Left lung (tissue), 14 donors: ENCODE measurements at regions of chr12 and their contacts with region 1.

Region 1: DNA sequence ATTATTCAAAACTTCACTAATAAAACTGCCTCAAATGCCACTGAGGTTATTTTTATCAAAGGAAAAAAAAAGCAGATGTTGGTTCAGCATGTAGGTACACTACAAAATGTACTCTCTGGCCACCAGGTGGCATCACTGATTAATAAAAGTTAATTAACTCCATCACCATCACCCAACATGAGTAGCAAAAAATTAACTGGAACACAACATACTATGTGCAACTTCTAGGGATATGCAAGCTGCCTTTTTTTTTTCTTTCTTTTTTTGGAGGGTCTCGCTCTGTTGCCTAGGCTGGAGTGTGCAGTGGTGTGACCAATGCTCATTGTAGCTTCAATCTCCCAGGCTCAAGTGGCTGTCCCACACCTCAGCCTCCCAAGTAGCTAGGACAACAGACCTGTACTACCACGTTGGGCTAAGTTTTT is 43.8 kb upstream of the NR2C1 start:
- DNase-seq: peak in 3 of 4 donors; percentile 51 to 84 (median 71)
- ATAC-seq: peak; percentile 84
- H3K4me3 ChIP-seq: no peak overlapping the region
- H3K27ac ChIP-seq: peak overlapping the region in 1 of 2 donors; percentile 57
- H3K4me1 ChIP-seq: peaks cover 11 to 18% of the 10 kb centered on the region in 2 donors
- H3K27me3 ChIP-seq: no peaks in the 10 kb centered on the region
- CTCF ChIP-seq: peak; percentile 72 to 77

Region 2: GRCh38 chr12:94889445-94890210 is 227.6 kb before region 1 on chr12:
- intact Hi-C with region 1: no loop called
- DNase-seq: no peak
- ATAC-seq: no peak
- H3K4me3 ChIP-seq: no peak overlapping the region
- H3K27ac ChIP-seq: no peak overlapping the region
- H3K4me1 ChIP-seq: no peaks in the 10 kb centered on the region
- H3K27me3 ChIP-seq: no peaks in the 10 kb centered on the region
- CTCF ChIP-seq: no peak

Region 3: DNA sequence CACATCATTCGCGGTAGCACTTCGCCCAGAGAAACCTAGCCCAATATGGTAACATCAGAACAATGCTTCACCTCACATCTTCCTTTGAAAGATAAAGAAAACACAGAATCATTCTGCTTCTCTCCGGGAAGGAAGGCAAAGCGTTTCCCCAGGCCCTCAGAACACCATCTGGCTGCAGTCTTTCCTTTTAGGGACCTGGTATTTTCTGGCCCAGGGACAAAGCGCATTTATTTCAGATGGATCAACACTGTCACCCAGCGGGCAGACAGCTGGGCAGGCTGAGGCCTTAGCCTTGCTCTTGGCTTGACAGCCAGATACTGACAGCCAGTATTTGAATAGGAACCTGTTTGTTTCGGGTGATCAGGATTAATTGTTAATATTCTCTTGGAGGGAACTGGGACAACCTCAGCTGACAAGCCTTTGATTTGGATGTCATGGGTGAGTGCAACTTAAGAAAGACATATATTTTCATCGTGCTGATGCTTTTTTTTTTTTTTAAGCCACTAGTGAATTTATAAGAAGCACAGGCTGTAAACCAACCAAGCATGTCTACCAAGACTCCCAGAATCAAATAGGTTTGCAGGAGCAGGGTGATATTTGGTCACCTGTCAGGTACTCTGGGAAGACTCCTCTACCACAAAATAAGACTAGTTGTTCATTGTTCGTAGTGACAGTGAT is 219.3 kb after region 1 on chr12:
- intact Hi-C with region 1: loop called in 1 of 2 experiments (anchors 10 kb)
- DNase-seq: peak in 3 of 4 donors; percentile 68 to 90 (median 82)
- ATAC-seq: peak; percentile 90
- H3K4me3 ChIP-seq: no peak overlapping the region
- H3K27ac ChIP-seq: peak overlapping the region; percentile 48 to 55
- H3K4me1 ChIP-seq: peaks cover 7 to 10% of the 10 kb centered on the region in 2 donors
- H3K27me3 ChIP-seq: no peaks in the 10 kb centered on the region
- CTCF ChIP-seq: peak; percentile 68 to 84